Endothelial cell of umbilical vein (primary cell): ENCODE measurements at regions of chr2 and their contacts with region 1.

Region 1: GRCh38 chr2:201182650-201183364 is at the start of gene CASP10:
- DNase-seq: peak; percentile 95
- H3K4me3 ChIP-seq: peak within 1 kb of the TSS; percentile 59 to 96 (median 85)
- H3K27ac ChIP-seq: peak within 1 kb of the TSS; percentile 77
- H3K4me1 ChIP-seq: peaks cover 18% of the 10 kb centered on the region
- H3K27me3 ChIP-seq: no peaks in the 10 kb centered on the region
- CTCF ChIP-seq: peak; percentile 51 to 65
- POLR2A ChIP-seq: peak; percentile 91
- total RNA-seq, gene CASP10: 31.1 and 37.6 TPM in 2 replicates

Region 2: DNA sequence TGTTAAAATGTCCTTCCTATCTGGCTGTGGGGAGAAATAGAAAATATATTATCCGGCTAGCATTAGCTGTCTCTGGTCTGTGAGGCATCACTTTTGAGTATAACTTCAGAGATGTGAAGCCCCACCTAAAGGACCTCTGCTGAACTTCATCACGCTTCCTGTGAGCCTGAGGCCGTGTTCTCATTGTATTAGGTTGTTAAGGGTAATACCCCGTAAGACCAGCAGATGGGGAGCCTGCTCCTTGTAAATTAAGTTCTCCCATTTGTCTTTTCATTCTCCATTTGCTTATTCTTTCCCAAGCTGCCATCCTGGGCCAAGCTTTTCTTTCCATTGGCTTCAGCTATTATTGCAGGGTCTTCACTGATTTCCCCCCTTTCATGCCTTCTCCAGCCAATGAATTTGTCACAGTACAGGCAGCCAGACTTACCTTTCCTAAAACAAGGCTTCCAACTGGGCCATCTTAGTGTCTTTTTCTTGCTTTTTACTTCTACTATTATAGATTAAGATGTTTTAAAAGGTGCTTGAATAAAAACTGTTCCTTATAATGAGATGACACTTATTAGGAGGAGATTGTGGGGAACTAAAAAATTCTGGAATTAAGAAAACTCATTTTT is 281.2 kb before region 1 on chr2:
- CTCF ChIA-PET with region 1: interaction called, 124 read pairs
- POLR2A ChIA-PET with region 1: no interaction called
- dilution Hi-C with region 1: loop called (anchors 25 kb)
- intact Hi-C with region 1: loop called (anchors 1 kb)
- DNase-seq: peak; percentile 91
- H3K4me3 ChIP-seq: no peak overlapping the region
- H3K27ac ChIP-seq: no peak overlapping the region
- H3K4me1 ChIP-seq: no peaks in the 10 kb centered on the region
- H3K27me3 ChIP-seq: no peaks in the 10 kb centered on the region
- CTCF ChIP-seq: peak; percentile 74 to 75
- POLR2A ChIP-seq: no peak

Region 3: GRCh38 chr2:201118121-201118960 is 64.5 kb before region 1 on chr2:
- CTCF ChIA-PET with region 1: interaction called, 12 read pairs
- POLR2A ChIA-PET with region 1: interaction called, 4 read pairs
- dilution Hi-C with region 1: no loop called
- intact Hi-C with region 1: no loop called
- DNase-seq: peak; percentile 90
- H3K4me3 ChIP-seq: peak overlapping the region; percentile 77 to 99 (median 77)
- H3K27ac ChIP-seq: peak overlapping the region; percentile 88
- H3K4me1 ChIP-seq: peaks cover 60% of the 10 kb centered on the region
- H3K27me3 ChIP-seq: no peaks in the 10 kb centered on the region
- CTCF ChIP-seq: peak; percentile 20 to 66
- POLR2A ChIP-seq: peak; percentile 67

Region 4: GRCh38 chr2:201220102-201220570 is 37.3 kb after region 1 on chr2:
- CTCF ChIA-PET with region 1: interaction called, 33 read pairs
- POLR2A ChIA-PET with region 1: interaction called, 4 read pairs
- dilution Hi-C with region 1: no loop called
- intact Hi-C with region 1: loop called (anchors 1 kb)
- DNase-seq: peak; percentile 92
- H3K4me3 ChIP-seq: no peak overlapping the region
- H3K27ac ChIP-seq: peak overlapping the region; percentile 53
- H3K4me1 ChIP-seq: peaks cover 26% of the 10 kb centered on the region
- H3K27me3 ChIP-seq: no peaks in the 10 kb centered on the region
- CTCF ChIP-seq: no peak
- POLR2A ChIP-seq: no peak

Region 5: GRCh38 chr2:201621293-201621999 is 438.6 kb after region 1 on chr2:
- CTCF ChIA-PET with region 1: interaction called, 4 read pairs
- POLR2A ChIA-PET with region 1: no interaction called
- dilution Hi-C with region 1: no loop called
- intact Hi-C with region 1: loop called (anchors 2 kb)
- DNase-seq: peak; percentile 89
- H3K4me3 ChIP-seq: peak overlapping the region in 1 of 3 experiments; percentile 20
- H3K27ac ChIP-seq: peak overlapping the region; percentile 74
- H3K4me1 ChIP-seq: peaks cover 26% of the 10 kb centered on the region
- H3K27me3 ChIP-seq: no peaks in the 10 kb centered on the region
- CTCF ChIP-seq: no peak
- POLR2A ChIP-seq: peak; percentile 61